ENCODE measurements at regions of chr12 and their contacts with region 1.

Region 1: GRCh38 chr12:4215229-4216186 is 58.1 kb upstream of the CCND2 start:
- DNase-seq: peak; percentile 60
- ATAC-seq: peak; percentile 83
- H3K4me3 Mint-ChIP-seq: peak overlapping the region; percentile 80
- H3K27ac Mint-ChIP-seq: peak overlapping the region; percentile 93
- H3K4me1 Mint-ChIP-seq: peaks cover 49% of the 10 kb centered on the region
- H3K27me3 Mint-ChIP-seq: no peaks in the 10 kb centered on the region
- CTCF ChIP-seq: no peak

Region 2: DNA sequence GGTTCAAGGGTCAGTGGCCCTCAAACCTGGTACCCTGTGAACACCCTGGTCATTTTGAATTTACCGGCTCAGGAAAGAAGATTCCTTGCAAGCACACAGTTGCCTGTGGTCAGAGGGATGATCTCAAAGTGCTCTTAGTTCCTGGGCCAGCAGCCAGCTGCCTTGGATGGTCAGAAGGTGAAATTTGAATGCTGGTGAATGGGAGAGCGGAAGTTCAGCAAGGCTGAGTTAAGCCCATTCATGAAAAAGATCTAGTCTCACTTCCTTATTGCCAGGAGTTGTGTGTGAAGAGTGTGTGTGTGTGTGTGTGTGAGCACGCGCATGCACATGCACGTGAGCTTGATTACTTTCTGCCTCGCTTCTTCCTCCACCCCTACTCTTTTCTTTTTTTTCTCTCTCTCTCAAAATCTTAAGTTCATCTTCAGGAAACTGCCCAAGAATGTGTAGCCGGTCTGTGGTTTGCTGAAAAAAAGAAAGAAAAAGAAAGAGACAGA is 97.4 kb before region 1 on chr12:
- CTCF ChIA-PET with region 1: interaction called, 3 read pairs
- POLR2A ChIA-PET with region 1: interaction called, 14 read pairs
- intact Hi-C with region 1: loop called (anchors 1 kb)
- DNase-seq: no peak
- ATAC-seq: peak; percentile 80
- H3K4me3 Mint-ChIP-seq: peak overlapping the region; percentile 69
- H3K27ac Mint-ChIP-seq: peak overlapping the region; percentile 81
- H3K4me1 Mint-ChIP-seq: peaks cover 56% of the 10 kb centered on the region
- H3K27me3 Mint-ChIP-seq: no peaks in the 10 kb centered on the region
- CTCF ChIP-seq: no peak

Region 3: GRCh38 chr12:4164559-4165558 is 50.6 kb before region 1 on chr12:
- CTCF ChIA-PET with region 1: interaction called, 5 read pairs
- POLR2A ChIA-PET with region 1: interaction called, 19 read pairs
- intact Hi-C with region 1: loop called (anchors 1 kb)
- DNase-seq: peak; percentile 60
- ATAC-seq: peak; percentile 75
- H3K4me3 Mint-ChIP-seq: peak overlapping the region; percentile 89
- H3K27ac Mint-ChIP-seq: peak overlapping the region; percentile 95
- H3K4me1 Mint-ChIP-seq: peaks cover 42% of the 10 kb centered on the region
- H3K27me3 Mint-ChIP-seq: no peaks in the 10 kb centered on the region
- CTCF ChIP-seq: no peak

Region 4: GRCh38 chr12:4203772-4204376 is 11.6 kb before region 1 on chr12:
- CTCF ChIA-PET with region 1: interaction called, 5 read pairs
- POLR2A ChIA-PET with region 1: interaction called, 52 read pairs
- intact Hi-C with region 1: loop called (anchors 1 kb)
- DNase-seq: no peak
- ATAC-seq: peak; percentile 15
- H3K4me3 Mint-ChIP-seq: peak overlapping the region; percentile 1
- H3K27ac Mint-ChIP-seq: peak overlapping the region; percentile 63
- H3K4me1 Mint-ChIP-seq: peaks cover 53% of the 10 kb centered on the region
- H3K27me3 Mint-ChIP-seq: no peaks in the 10 kb centered on the region
- CTCF ChIP-seq: no peak

Region 5: GRCh38 chr12:4261655-4262054 is 46.1 kb after region 1 on chr12:
- CTCF ChIA-PET with region 1: no interaction called
- POLR2A ChIA-PET with region 1: interaction called, 13 read pairs
- intact Hi-C with region 1: no loop called
- DNase-seq: no peak
- ATAC-seq: peak; percentile 25
- H3K4me3 Mint-ChIP-seq: no peak overlapping the region
- H3K27ac Mint-ChIP-seq: no peak overlapping the region
- H3K4me1 Mint-ChIP-seq: peaks cover 16% of the 10 kb centered on the region
- H3K27me3 Mint-ChIP-seq: no peaks in the 10 kb centered on the region
- CTCF ChIP-seq: no peak

Region 6: GRCh38 chr12:4269279-4269991 is 53.9 kb after region 1 on chr12:
- CTCF ChIA-PET with region 1: interaction called, 9 read pairs
- POLR2A ChIA-PET with region 1: interaction called, 189 read pairs
- intact Hi-C with region 1: loop called (anchors 1 kb)
- DNase-seq: peak; percentile 84
- ATAC-seq: peak; percentile 30
- H3K4me3 Mint-ChIP-seq: peak overlapping the region; percentile 91
- H3K27ac Mint-ChIP-seq: peak overlapping the region; percentile 95
- H3K4me1 Mint-ChIP-seq: peaks cover 33% of the 10 kb centered on the region
- H3K27me3 Mint-ChIP-seq: no peaks in the 10 kb centered on the region
- CTCF ChIP-seq: no peak

Region 7: GRCh38 chr12:4320853-4321701 is 105.6 kb after region 1 on chr12 and contains the start of gene TIGAR:
- CTCF ChIA-PET with region 1: no interaction called
- POLR2A ChIA-PET with region 1: no interaction called
- intact Hi-C with region 1: loop called (anchors 2 kb)
- DNase-seq: peak; percentile 94
- ATAC-seq: peak; percentile 97
- H3K4me3 Mint-ChIP-seq: peak within 1 kb of the TSS; percentile 95
- H3K27ac Mint-ChIP-seq: peak within 1 kb of the TSS; percentile 92
- H3K4me1 Mint-ChIP-seq: peaks cover 34% of the 10 kb centered on the region
- H3K27me3 Mint-ChIP-seq: no peaks in the 10 kb centered on the region
- CTCF ChIP-seq: no peak
- total RNA-seq, gene TIGAR: 10.0 and 10.2 TPM in 2 replicates